Left ventricle myocardium inferior (tissue), 1 donor: ENCODE measurements at regions of chr1 and their contacts with region 1.

Region 1: DNA sequence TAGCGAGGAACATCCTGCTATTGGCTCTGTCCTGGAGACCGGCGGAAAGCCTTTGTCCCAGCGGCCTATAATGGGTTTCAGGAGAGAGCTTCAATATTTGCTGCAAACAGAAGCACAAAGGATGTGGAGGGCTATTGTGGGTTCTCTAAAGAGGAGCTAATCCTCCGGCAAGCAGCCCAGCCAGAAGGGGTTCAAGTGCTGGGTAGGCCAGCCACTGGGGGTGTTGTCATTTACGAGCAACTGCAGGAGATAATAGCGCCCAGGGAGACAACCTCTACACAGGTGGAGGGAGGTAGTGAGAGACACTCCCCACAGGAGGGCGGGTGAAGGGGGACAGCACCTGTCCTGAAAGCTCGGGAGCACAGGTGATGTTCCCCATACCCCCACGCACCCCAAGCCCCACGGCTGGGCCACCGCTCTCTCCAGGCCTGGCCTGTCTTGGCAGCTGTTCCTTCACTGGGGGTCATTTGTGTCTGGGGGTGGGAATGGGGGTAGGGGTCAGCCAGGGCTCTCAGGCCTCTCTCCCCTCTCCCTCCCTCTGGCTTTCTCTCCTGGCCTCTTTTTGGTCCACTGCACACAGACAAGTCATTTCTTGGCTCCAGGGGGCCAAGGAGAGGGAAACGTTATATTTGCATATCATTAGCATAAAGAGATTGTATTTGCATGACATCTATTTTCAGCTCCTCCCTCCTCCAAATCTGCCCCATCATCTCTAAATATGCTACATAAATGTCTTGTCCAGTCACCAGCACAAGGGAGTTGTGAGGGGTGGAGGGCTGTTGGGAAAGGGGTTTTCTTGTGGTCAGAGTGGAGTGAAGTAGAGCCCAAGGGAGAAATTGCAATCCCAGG is 22.0 kb upstream of the SLC26A9 start:
- DNase-seq: no peak
- H3K4me3 ChIP-seq: no peak overlapping the region
- H3K27ac ChIP-seq: no peak overlapping the region
- H3K4me1 ChIP-seq: peaks cover 19% of the 10 kb centered on the region
- H3K27me3 ChIP-seq: no peaks in the 10 kb centered on the region
- CTCF ChIP-seq: no peak

Region 2: GRCh38 chr1:205798600-205798999 is 166.7 kb before region 1 on chr1:
- intact Hi-C with region 1: loop called (anchors 5 kb)
- DNase-seq: no peak
- H3K4me3 ChIP-seq: no peak overlapping the region
- H3K27ac ChIP-seq: peak overlapping the region; percentile 4
- H3K4me1 ChIP-seq: peaks cover 72% of the 10 kb centered on the region
- H3K27me3 ChIP-seq: no peaks in the 10 kb centered on the region
- CTCF ChIP-seq: no peak

Region 3: GRCh38 chr1:205907794-205908193 is 57.5 kb before region 1 on chr1:
- intact Hi-C with region 1: no loop called
- DNase-seq: no peak
- H3K4me3 ChIP-seq: no peak overlapping the region
- H3K27ac ChIP-seq: no peak overlapping the region
- H3K4me1 ChIP-seq: peaks cover 3% of the 10 kb centered on the region
- H3K27me3 ChIP-seq: no peaks in the 10 kb centered on the region
- CTCF ChIP-seq: peak; percentile 70

Region 4: GRCh38 chr1:206041640-206042039 is 76.4 kb after region 1 on chr1:
- intact Hi-C with region 1: no loop called
- DNase-seq: no peak
- H3K4me3 ChIP-seq: no peak overlapping the region
- H3K27ac ChIP-seq: no peak overlapping the region
- H3K4me1 ChIP-seq: no peaks in the 10 kb centered on the region
- H3K27me3 ChIP-seq: peaks cover 49% of the 10 kb centered on the region
- CTCF ChIP-seq: no peak